Tibial artery (tissue), 4 donors: ENCODE measurements at regions of chr11 and their contacts with region 1.

Region 1: GRCh38 chr11:11884774-11885481 is 43.2 kb downstream of the USP47 start:
- DNase-seq: no peak
- H3K4me3 ChIP-seq: no peak overlapping the region
- H3K27ac ChIP-seq: no peak overlapping the region
- H3K4me1 ChIP-seq: peaks cover 0 to 18% (median 0%) of the 10 kb centered on the region in 4 donors
- H3K27me3 ChIP-seq: no peaks in the 10 kb centered on the region
- CTCF ChIP-seq: no peak

Region 2: GRCh38 chr11:11826260-11826659 is 58.7 kb before region 1 on chr11:
- intact Hi-C with region 1: loop called (anchors 5 kb)
- DNase-seq: no peak
- H3K4me3 ChIP-seq: no peak overlapping the region
- H3K27ac ChIP-seq: no peak overlapping the region
- H3K4me1 ChIP-seq: no peaks in the 10 kb centered on the region
- H3K27me3 ChIP-seq: no peaks in the 10 kb centered on the region
- CTCF ChIP-seq: no peak